ENCODE measurements at regions of chr4 and their contacts with region 1.

Region 1: GRCh38 chr4:42519803-42520417 is 122.6 kb downstream of the SHISA3 start:
- DNase-seq: peak; percentile 59
- H3K4me3 ChIP-seq: no peak overlapping the region
- H3K27ac ChIP-seq: no peak overlapping the region
- H3K4me1 ChIP-seq: no peaks in the 10 kb centered on the region
- H3K27me3 ChIP-seq: no peaks in the 10 kb centered on the region; the same call in 1 of the 2 replicates

Region 2: GRCh38 chr4:42282081-42282901 is 237.6 kb before region 1 on chr4:
- in situ Hi-C with region 1: loop called (anchors 10 kb)
- DNase-seq: peak; percentile 85
- H3K4me3 ChIP-seq: no peak overlapping the region
- H3K27ac ChIP-seq: no peak overlapping the region
- H3K4me1 ChIP-seq: no peaks in the 10 kb centered on the region
- H3K27me3 ChIP-seq: no peaks in the 10 kb centered on the region; the same call in 1 of the 2 replicates

Region 3: DNA sequence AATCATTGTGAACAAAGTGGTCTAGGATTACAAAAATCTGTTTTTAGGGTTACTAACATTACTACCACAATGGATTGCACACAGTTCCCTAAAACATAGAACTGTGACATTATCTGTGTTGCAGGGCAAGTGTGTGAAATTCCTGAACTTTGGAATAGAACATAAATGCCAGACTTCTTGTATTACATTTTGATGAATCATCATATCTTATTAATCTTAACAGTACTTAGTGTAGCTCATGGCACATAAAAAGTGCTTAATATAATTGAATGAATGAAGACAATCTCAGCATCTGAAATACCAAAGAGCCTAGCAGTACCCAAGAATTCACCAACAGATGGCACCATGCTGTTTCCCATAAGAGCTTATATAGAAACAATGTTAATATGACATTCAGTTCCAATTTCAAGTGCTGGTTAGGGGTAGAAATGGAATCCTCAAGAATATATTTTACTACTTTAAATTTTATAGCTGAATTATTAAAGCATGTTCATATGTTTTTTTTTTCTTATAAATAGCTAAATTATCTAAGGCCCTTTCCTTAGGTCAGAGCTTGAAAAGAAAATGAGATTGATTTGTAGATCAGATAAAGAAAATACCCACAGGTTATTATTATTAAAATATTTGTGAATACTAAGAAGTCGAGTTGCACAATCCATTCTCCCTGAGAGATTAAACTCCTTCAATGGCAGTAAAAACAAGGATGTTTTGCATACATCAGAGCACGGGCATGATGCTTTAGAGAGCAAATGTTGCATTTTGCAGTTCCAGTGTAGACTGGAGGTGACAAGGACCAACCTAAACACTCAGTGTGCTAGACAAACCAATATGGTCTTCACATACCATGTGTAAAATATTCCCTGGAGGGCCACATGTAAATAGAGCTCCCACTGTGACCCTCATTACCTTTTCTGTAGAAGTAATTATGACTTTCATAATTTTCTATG is 148.3 kb before region 1 on chr4:
- in situ Hi-C with region 1: loop called (anchors 10 kb)
- DNase-seq: peak; percentile 61
- H3K4me3 ChIP-seq: no peak overlapping the region
- H3K27ac ChIP-seq: no peak overlapping the region
- H3K4me1 ChIP-seq: no peaks in the 10 kb centered on the region
- H3K27me3 ChIP-seq: no peaks in the 10 kb centered on the region

Region 4: DNA sequence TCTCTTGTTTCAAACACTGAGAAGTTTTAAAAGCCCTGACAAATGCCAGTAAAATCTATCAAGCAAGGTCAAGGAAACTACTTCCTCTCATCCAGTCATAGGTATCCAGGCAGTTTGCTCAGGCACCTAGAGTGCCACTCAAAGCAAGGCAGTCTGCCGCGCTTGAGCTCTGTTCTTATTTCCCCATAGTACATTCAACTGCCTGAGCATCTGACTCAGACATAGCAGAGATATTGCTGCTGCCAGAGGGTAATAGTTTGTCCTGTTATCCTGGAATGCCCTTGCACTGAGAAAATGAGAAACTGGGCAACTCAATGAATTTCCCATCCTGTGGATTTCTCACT is 153.1 kb after region 1 on chr4:
- in situ Hi-C with region 1: no loop called
- DNase-seq: peak; percentile 61
- H3K4me3 ChIP-seq: no peak overlapping the region
- H3K27ac ChIP-seq: no peak overlapping the region
- H3K4me1 ChIP-seq: no peaks in the 10 kb centered on the region
- H3K27me3 ChIP-seq: peaks cover 6% of the 10 kb centered on the region; the same call in 1 of the 2 replicates